Naive thymus-derived CD4-positive, alpha-beta T cell (primary cell): ENCODE measurements at regions of chr4 and their contacts with region 1.

Region 1: DNA sequence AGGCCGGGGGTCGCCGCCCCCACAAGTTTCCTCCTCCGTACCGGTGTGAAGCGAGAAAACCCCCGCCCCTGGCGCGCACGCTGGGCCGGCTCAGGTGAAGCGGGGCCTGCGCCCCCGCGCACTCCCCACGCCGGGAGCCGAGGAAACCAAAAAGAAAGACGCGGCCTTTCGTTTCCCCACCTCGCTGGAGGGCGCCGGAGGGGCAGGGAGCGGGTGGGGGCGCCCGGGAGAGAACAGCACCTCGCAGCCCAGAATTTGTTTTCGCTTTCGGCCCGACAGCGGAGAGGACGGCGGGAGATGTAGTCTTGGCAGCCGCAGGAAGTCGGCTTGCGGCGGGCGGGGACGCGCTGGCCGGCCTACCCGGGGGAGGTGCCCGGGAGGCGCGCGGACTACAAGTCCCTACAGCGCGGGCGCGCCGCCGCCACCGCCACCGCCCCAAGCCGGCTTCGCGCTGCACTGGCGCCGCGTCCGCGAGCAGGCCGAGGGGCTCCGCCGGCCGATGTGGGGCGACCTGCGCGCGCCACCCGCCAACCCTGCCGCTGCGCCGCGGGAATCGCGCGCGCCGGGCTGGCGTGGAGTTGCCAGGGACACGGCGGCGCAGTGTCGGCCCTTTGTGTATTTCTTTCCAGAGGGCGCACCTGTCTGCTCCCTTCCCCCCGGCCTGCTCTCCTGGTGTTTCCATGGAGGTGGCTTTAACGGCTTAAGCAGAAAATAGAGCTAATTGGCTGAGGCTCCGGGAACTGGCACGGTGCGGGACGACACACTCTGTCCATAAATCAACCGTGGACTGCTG is at the start of gene OTUD4:
- DNase-seq: peak; percentile 89 to 97 (median 95)
- ATAC-seq: peak; percentile 93
- H3K4me3 ChIP-seq: peak within 1 kb of the TSS; percentile 81
- H3K4me3 Mint-ChIP-seq: peak within 1 kb of the TSS; percentile 80 to 98 (median 97)
- H3K27ac ChIP-seq: peak within 1 kb of the TSS; percentile 96
- H3K27ac Mint-ChIP-seq: peak within 1 kb of the TSS; percentile 94 to 98 (median 97)
- H3K4me1 ChIP-seq: peaks cover 21 to 31% of the 10 kb centered on the region in 2 donors
- H3K4me1 Mint-ChIP-seq: peaks cover 21 to 35% (median 30%) of the 10 kb centered on the region in 7 donors
- H3K27me3 ChIP-seq: no peaks in the 10 kb centered on the region
- H3K27me3 Mint-ChIP-seq: peaks cover 0 to 3% (median 0%) of the 10 kb centered on the region in 5 donors
- total RNA-seq, gene OTUD4: 49.2 to 65.4 (median 59.9) TPM

Region 2: DNA sequence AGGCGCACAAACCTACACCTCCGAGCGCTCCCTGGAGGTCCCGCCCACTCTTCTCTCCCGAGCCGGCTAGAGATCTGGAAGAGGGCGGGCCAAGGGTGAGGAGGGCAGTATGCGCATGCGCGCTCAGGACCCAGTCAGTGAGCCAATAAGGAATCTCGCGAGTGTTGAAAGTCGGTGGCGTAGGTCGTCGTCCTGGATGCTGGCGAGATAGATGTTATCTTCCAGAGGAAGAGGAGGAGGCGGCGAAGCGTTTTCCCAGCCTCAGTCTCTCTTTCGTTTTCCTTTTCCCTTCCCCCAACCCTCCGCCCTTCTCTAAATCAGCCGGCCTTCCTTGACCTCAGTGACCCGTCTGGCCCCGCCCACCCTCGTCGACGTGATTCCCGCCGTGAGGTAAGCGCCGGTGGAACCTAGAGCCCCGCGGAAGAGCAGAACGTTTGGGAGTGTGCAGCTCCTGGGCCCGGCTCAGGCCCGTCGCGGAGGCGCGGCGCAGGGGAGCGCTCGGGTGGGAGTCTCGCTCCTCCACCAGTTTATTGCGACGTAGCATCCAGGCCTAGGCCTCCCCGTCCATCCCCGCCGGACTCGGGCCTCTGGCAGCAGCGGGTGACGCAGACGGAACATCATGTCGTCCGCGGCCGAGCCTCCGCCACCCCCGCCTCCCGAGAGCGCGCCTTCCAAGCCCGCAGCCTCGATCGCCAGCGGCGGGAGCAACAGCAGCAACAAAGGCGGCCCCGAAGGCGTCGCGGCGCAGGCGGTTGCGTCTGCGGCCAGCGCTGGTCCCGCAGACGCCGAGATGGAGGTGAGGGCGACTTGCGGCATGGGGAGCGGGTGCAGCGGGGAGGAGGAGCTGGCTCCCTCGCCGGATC is 1667.0 kb before region 1 on chr4 and contains the start of gene SMARCA5:
- CTCF ChIA-PET with region 1: no interaction called
- POLR2A ChIA-PET with region 1: no interaction called
- intact Hi-C with region 1: loop called in 1 of 2 experiments (anchors 1 kb)
- DNase-seq: peak; percentile 93 to 99 (median 98)
- ATAC-seq: peak; percentile 92
- H3K4me3 ChIP-seq: peak within 1 kb of the TSS; percentile 91
- H3K4me3 Mint-ChIP-seq: peak within 1 kb of the TSS; percentile 93 to 100 (median 98)
- H3K27ac ChIP-seq: peak within 1 kb of the TSS; percentile 98
- H3K27ac Mint-ChIP-seq: peak within 1 kb of the TSS; percentile 97 to 100 (median 100)
- H3K4me1 ChIP-seq: peaks cover 20 to 36% of the 10 kb centered on the region in 2 donors
- H3K4me1 Mint-ChIP-seq: peaks cover 22 to 54% (median 37%) of the 10 kb centered on the region in 7 donors
- H3K27me3 ChIP-seq: no peaks in the 10 kb centered on the region
- H3K27me3 Mint-ChIP-seq: peaks cover 0 to 30% (median 0%) of the 10 kb centered on the region in 5 donors
- total RNA-seq, gene SMARCA5: 48.3 to 58.2 (median 54.4) TPM

Region 3: GRCh38 chr4:145097821-145098674 is 82.4 kb before region 1 on chr4 and contains the starts of genes ABCE1 and ANAPC10:
- CTCF ChIA-PET with region 1: interaction called, 3 read pairs
- POLR2A ChIA-PET with region 1: interaction called, 25 read pairs
- intact Hi-C with region 1: loop called (anchors 1 kb)
- DNase-seq: peak; percentile 88 to 98 (median 94)
- ATAC-seq: peak; percentile 96
- H3K4me3 ChIP-seq: peak within 1 kb of the TSS; percentile 94
- H3K4me3 Mint-ChIP-seq: peak within 1 kb of the TSS in 9 of 10 donors; percentile 93 to 98 (median 96)
- H3K27ac ChIP-seq: peak within 1 kb of the TSS; percentile 80
- H3K27ac Mint-ChIP-seq: peak within 1 kb of the TSS; percentile 95 to 99 (median 98)
- H3K4me1 ChIP-seq: peaks cover 22 to 23% of the 10 kb centered on the region in 2 donors
- H3K4me1 Mint-ChIP-seq: peaks cover 28 to 52% (median 33%) of the 10 kb centered on the region in 7 donors
- H3K27me3 ChIP-seq: no peaks in the 10 kb centered on the region
- H3K27me3 Mint-ChIP-seq: no peaks in the 10 kb centered on the region
- total RNA-seq, gene ABCE1: 43.4 to 81.3 (median 62.2) TPM
- total RNA-seq, gene ANAPC10: 13.2 to 28.0 (median 19.6) TPM

Region 4: DNA sequence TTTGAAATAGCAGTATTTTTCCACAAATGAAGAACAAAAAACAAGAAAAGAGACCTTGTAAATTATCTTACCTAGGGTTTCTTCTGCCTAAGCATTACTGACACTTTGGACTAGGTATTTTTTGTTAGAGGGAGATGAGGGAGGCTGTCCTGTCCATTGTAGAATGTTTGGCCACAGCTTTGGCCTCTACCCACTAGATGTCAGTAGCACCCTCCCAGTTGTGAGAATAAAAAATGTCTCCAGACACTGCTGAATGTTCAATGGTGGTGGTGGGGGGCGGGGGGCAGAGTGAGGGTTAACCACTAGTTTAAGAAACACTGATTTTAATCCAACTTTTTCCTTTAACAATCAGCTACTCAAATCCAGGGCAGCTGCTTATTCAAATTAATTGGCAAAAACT is 25.9 kb before region 1 on chr4:
- CTCF ChIA-PET with region 1: interaction called, 3 read pairs
- POLR2A ChIA-PET with region 1: no interaction called
- intact Hi-C with region 1: loop called (anchors 2 kb)
- DNase-seq: peak in 1 of 9 donors; percentile 11
- ATAC-seq: peak; percentile 45
- H3K4me3 ChIP-seq: no peak overlapping the region
- H3K4me3 Mint-ChIP-seq: no peak overlapping the region
- H3K27ac ChIP-seq: no peak overlapping the region
- H3K27ac Mint-ChIP-seq: peak overlapping the region in 1 of 9 donors; percentile 38
- H3K4me1 ChIP-seq: no peaks in the 10 kb centered on the region
- H3K4me1 Mint-ChIP-seq: peaks cover 0 to 26% (median 4%) of the 10 kb centered on the region in 7 donors
- H3K27me3 ChIP-seq: no peaks in the 10 kb centered on the region
- H3K27me3 Mint-ChIP-seq: no peaks in the 10 kb centered on the region

Region 5: GRCh38 chr4:145234091-145234706 is 53.7 kb after region 1 on chr4:
- CTCF ChIA-PET with region 1: no interaction called
- POLR2A ChIA-PET with region 1: no interaction called
- intact Hi-C with region 1: loop called in 1 of 2 experiments (anchors 2 kb)
- DNase-seq: peak; percentile 7 to 56 (median 46)
- ATAC-seq: peak; percentile 98
- H3K4me3 ChIP-seq: no peak overlapping the region
- H3K4me3 Mint-ChIP-seq: no peak overlapping the region
- H3K27ac ChIP-seq: no peak overlapping the region
- H3K27ac Mint-ChIP-seq: no peak overlapping the region
- H3K4me1 ChIP-seq: no peaks in the 10 kb centered on the region
- H3K4me1 Mint-ChIP-seq: no peaks in the 10 kb centered on the region
- H3K27me3 ChIP-seq: no peaks in the 10 kb centered on the region
- H3K27me3 Mint-ChIP-seq: peaks cover 0 to 16% (median 0%) of the 10 kb centered on the region in 5 donors

Region 6: GRCh38 chr4:145732895-145733880 is 552.7 kb after region 1 on chr4:
- CTCF ChIA-PET with region 1: no interaction called
- POLR2A ChIA-PET with region 1: no interaction called
- intact Hi-C with region 1: loop called (anchors 1 kb)
- DNase-seq: peak; percentile 56 to 87 (median 68)
- ATAC-seq: peak; percentile 97
- H3K4me3 ChIP-seq: peak overlapping the region; percentile 59
- H3K4me3 Mint-ChIP-seq: peak overlapping the region; percentile 72 to 86 (median 82)
- H3K27ac ChIP-seq: peak overlapping the region; percentile 63
- H3K27ac Mint-ChIP-seq: peak overlapping the region in 5 of 9 donors; percentile 50 to 77 (median 62)
- H3K4me1 ChIP-seq: peaks cover 0 to 4% of the 10 kb centered on the region in 2 donors
- H3K4me1 Mint-ChIP-seq: peaks cover 0 to 13% (median 9%) of the 10 kb centered on the region in 7 donors
- H3K27me3 ChIP-seq: no peaks in the 10 kb centered on the region
- H3K27me3 Mint-ChIP-seq: peaks cover 0 to 11% (median 3%) of the 10 kb centered on the region in 5 donors

Region 7: DNA sequence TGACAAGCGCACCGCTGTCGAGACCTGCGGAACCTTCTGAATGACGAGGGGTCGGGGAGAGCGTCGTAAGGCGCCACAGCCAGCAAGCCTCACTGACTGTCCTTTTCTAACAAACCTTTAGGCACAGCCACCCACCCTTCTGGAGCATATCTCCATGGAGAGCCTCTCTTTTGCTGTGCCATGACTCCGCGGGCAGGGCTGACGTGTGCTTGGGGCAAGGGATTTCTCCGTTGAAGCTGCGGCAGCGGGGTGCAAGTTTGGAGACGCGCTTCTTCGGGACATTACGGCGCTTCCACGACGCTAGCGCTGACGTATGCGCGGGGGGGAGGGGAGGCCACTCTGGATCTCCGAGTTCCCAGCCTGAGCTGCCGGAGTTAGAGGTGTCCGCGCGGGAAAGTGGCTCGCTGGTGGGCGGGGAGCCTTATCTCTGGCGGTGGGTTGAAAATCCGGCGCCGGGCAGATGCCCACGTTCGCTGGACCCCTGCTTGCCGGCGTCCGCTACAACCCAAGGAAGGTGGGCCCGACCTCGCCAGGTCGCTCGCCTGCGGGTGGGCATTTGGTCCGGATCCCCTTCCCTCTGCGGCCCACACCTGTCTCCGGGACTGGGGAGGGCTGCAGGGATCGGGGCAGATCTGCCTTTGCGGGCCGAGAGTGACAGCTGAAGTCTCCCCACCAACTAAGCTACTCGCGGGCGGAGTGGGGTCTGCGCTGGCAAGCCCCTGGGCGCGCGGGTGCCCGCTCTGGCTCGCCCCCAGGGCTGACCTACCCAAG is 1341.8 kb after region 1 on chr4:
- CTCF ChIA-PET with region 1: no interaction called
- POLR2A ChIA-PET with region 1: no interaction called
- intact Hi-C with region 1: loop called in 1 of 2 experiments (anchors 2 kb)
- DNase-seq: peak; percentile 63 to 83 (median 76)
- ATAC-seq: peak; percentile 93
- H3K4me3 ChIP-seq: peak overlapping the region; percentile 95
- H3K4me3 Mint-ChIP-seq: no peak overlapping the region
- H3K27ac ChIP-seq: peak overlapping the region; percentile 85
- H3K27ac Mint-ChIP-seq: peak overlapping the region in 2 of 9 donors; percentile 58 to 69
- H3K4me1 ChIP-seq: peaks cover 13 to 24% of the 10 kb centered on the region in 2 donors
- H3K4me1 Mint-ChIP-seq: peaks cover 17 to 37% (median 31%) of the 10 kb centered on the region in 7 donors
- H3K27me3 ChIP-seq: no peaks in the 10 kb centered on the region
- H3K27me3 Mint-ChIP-seq: peaks cover 0 to 7% (median 0%) of the 10 kb centered on the region in 5 donors